ENCODE measurements at regions of chr5 and their contacts with region 1.

Region 1: GRCh38 chr5:131589510-131590348 is 45.3 kb downstream of the RAPGEF6 start:
- DNase-seq: peak; percentile 41
- ATAC-seq: peak; percentile 51
- H3K4me3 ChIP-seq: no peak overlapping the region
- H3K27ac ChIP-seq: no peak overlapping the region
- H3K4me1 ChIP-seq: peaks cover 8% of the 10 kb centered on the region
- H3K27me3 ChIP-seq: no peaks in the 10 kb centered on the region
- CTCF ChIP-seq: peak; percentile 78

Region 2: DNA sequence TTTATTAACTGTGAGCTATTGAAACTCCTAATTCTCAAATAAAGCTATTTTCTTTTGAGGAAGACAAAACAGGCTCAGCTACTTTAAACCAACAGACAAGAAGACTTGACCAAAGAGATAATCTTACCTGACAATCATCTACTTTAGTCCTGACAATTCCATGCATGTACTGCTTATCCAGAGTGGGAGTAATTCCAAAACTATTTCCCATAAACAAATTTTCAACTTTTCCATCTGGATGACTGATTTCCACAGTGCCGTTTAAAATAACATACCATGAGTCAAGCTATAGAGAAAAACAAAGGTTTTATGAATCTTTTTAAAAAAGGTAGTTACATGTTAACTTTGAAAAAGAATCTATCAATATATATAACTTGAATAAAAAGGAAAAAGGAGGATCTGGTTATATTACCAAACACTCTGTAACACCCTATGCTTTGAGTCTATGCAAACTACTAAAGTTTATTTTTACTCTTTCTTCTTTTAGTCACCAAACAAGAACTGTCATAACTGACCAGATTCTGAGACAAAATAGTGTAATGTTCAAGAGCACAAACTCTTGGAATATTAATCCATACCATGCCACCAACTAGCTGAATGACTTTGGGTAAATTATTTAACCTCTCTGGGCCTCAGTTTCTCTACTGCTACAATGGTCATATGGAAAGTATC is 84.4 kb before region 1 on chr5:
- CTCF ChIA-PET with region 1: no interaction called
- POLR2A ChIA-PET with region 1: no interaction called
- intact Hi-C with region 1: no loop called
- DNase-seq: peak; percentile 4
- ATAC-seq: no peak
- H3K4me3 ChIP-seq: no peak overlapping the region
- H3K27ac ChIP-seq: no peak overlapping the region
- H3K4me1 ChIP-seq: no peaks in the 10 kb centered on the region
- H3K27me3 ChIP-seq: no peaks in the 10 kb centered on the region
- CTCF ChIP-seq: no peak

Region 3: DNA sequence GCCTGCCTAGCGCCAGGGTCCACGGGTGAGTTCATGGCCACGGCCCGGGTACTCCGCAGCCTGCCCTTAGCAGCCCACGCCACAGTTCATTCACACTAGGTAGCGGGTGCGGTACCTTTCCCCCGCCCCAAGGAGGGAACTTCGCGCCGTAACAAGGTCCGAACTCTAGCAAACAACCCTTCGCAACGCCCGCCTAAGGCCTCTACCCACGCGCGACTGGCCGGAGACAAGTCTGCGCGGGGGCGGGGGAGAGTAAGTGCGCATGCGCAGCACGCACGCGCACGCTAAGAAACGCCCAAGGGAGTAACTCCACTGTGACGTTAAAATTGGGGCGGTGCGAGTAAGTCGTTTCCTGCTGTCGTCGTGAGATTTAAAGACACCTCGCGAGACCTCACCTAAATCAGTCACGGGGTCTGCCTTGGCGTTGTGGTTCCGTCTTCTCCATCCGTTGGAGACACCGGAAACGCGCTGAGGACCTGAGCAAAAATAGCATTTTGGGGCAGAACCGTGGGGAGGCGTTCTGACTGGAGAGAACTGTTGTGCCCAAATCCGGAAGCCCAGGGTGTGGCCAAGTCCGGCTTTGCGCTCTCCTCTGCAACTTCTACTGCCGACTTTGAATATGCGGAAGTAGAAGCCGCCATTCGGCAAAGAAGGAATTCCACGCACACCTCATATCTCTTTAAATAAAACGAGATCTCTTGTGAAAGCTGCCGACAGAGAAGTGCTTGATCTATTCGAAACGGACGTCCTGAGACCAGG is 45.4 kb after region 1 on chr5 and contains the start of gene RAPGEF6:
- CTCF ChIA-PET with region 1: no interaction called
- POLR2A ChIA-PET with region 1: no interaction called
- intact Hi-C with region 1: loop called (anchors 1 kb)
- DNase-seq: peak; percentile 97
- ATAC-seq: peak; percentile 81
- H3K4me3 ChIP-seq: peak within 1 kb of the TSS; percentile 77
- H3K27ac ChIP-seq: peak within 1 kb of the TSS; percentile 99
- H3K4me1 ChIP-seq: peaks cover 31% of the 10 kb centered on the region
- H3K27me3 ChIP-seq: no peaks in the 10 kb centered on the region
- CTCF ChIP-seq: no peak
- total RNA-seq, gene RAPGEF6: 9.7 and 9.8 TPM in 2 replicates

Region 4: DNA sequence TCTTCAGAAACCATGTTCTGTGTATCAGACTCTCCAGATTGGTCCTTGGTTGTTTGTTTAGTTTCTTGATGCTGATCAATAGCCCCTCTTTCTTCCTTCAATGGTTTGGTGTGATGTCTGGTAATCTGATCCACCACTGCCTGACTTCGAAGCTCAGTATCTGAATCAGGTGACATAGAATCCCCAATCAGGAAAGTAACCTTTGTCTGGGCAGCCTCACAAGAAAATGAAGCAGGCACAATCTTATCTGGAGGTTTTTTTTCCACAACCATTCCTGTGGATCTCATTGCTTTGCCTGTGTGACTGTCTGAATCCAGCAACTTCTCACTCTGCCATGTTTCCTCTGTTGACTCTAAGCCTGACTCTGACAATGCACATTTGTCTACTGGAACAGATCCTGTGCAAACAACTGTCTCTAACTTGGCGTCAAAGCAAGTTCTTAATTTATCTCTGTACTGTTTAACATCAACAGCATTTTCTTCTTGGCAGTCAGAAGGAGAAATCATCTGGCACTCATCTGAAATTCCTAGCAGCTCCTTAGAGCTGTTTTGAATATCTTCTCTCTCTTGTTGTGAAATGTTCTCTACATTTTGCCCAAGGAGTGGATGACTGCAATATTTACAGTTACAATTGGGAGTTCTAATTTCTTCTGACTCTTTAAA is 82.4 kb after region 1 on chr5:
- CTCF ChIA-PET with region 1: no interaction called
- POLR2A ChIA-PET with region 1: no interaction called
- intact Hi-C with region 1: loop called (anchors 10 kb)
- DNase-seq: peak; percentile 5
- ATAC-seq: peak; percentile 86
- H3K4me3 ChIP-seq: no peak overlapping the region
- H3K27ac ChIP-seq: no peak overlapping the region
- H3K4me1 ChIP-seq: no peaks in the 10 kb centered on the region
- H3K27me3 ChIP-seq: no peaks in the 10 kb centered on the region
- CTCF ChIP-seq: no peak

Region 5: DNA sequence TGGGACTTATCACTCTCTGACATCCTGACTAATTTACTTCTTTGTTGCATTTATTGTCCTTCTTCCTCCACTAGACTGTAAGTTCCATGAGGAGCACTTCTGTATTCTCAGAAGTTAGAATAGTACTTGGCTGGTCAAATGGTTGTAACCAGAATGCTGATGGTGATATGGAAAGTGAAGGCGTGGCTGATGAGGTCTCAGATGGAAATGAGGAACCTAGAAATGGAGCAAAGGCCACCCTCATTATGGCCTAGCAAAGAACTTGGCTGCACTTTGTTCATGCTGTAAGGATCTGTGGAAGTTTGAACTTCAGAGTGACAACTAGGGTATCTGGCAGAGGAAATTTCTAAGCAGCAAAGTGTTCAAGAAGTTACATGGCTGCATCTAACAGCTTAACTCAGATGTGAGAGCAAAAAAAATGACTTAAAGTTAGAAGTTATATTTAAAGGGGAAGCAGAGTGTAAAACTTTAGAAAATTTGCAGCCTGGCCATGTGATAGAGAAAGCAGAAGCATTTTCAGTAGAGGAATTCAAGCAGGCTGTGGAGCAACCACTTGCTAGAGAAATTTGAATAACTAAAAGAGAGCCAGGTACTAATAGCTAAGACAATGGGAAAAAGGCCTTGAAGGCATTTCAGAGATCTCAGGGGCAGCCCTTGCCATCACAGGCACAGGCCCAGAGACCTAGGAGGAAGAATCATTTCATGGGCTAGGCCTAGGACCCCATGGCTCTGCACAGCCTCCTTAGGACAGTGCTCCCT is 764.8 kb after region 1 on chr5:
- CTCF ChIA-PET with region 1: no interaction called
- POLR2A ChIA-PET with region 1: no interaction called
- intact Hi-C with region 1: no loop called
- DNase-seq: no peak
- ATAC-seq: no peak
- H3K4me3 ChIP-seq: no peak overlapping the region
- H3K27ac ChIP-seq: no peak overlapping the region
- H3K4me1 ChIP-seq: no peaks in the 10 kb centered on the region
- H3K27me3 ChIP-seq: no peaks in the 10 kb centered on the region
- CTCF ChIP-seq: no peak